Heart right ventricle (tissue), 16 donors: ENCODE measurements at regions of chr1 and their contacts with region 1.

Region 1: GRCh38 chr1:226679853-226680516 is 59.1 kb downstream of the ITPKB start:
- DNase-seq: peak; percentile 89 to 91
- ATAC-seq: peak; percentile 84 to 90 (median 88)
- H3K4me3 ChIP-seq: peak overlapping the region in 9 of 10 donors; percentile 0 to 52 (median 48)
- H3K27ac ChIP-seq: peak overlapping the region; percentile 42 to 93 (median 90)
- H3K4me1 ChIP-seq: peaks cover 0 to 100% (median 78%) of the 10 kb centered on the region in 9 donors
- H3K27me3 ChIP-seq: no peaks in the 10 kb centered on the region
- CTCF ChIP-seq: peak in 1 of 9 donors; percentile 7

Region 2: DNA sequence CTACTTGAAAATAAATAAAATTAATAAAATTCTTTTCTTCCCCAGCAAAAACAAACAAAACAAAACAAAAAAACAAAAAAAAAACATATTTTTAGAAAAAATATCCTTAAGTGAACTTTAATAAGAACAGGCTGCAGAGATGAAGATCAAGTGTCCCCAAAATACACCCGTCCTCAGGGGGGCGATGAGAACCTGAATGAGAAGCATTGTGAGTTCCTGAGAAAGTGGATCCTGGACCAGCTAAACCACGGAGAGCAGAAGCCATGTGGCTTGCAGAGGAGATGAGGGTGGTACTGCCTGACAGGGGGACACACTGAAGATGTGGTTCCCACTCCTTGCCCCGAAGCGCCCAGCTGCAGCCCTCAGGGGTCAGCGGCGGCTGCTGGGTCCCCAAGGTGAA is 30.2 kb before region 1 on chr1:
- intact Hi-C with region 1: loop called in 1 of 10 experiments (anchors 5 kb)
- DNase-seq: no peak
- ATAC-seq: peak in 5 of 8 donors; percentile 13 to 39 (median 25)
- H3K4me3 ChIP-seq: peak overlapping the region in 1 of 10 donors; percentile 5
- H3K27ac ChIP-seq: peak overlapping the region in 6 of 10 donors; percentile 7 to 70 (median 50)
- H3K4me1 ChIP-seq: peaks cover 12 to 47% (median 31%) of the 10 kb centered on the region in 9 donors
- H3K27me3 ChIP-seq: no peaks in the 10 kb centered on the region
- CTCF ChIP-seq: peak in 6 of 9 donors; percentile 11 to 49 (median 38)

Region 3: GRCh38 chr1:226662642-226663326 is 17.2 kb before region 1 on chr1:
- intact Hi-C with region 1: loop called in 1 of 10 experiments (anchors 1 kb)
- DNase-seq: peak; percentile 54 to 79
- ATAC-seq: peak; percentile 47 to 70 (median 61)
- H3K4me3 ChIP-seq: peak overlapping the region in 4 of 10 donors; percentile 10 to 14 (median 11)
- H3K27ac ChIP-seq: peak overlapping the region in 7 of 10 donors; percentile 7 to 92 (median 86)
- H3K4me1 ChIP-seq: peaks cover 0 to 100% (median 30%) of the 10 kb centered on the region in 9 donors
- H3K27me3 ChIP-seq: no peaks in the 10 kb centered on the region
- CTCF ChIP-seq: no peak

Region 4: GRCh38 chr1:227016990-227017389 is 337.0 kb after region 1 on chr1:
- intact Hi-C with region 1: no loop called
- DNase-seq: no peak
- ATAC-seq: no peak
- H3K4me3 ChIP-seq: no peak overlapping the region
- H3K27ac ChIP-seq: no peak overlapping the region
- H3K4me1 ChIP-seq: no peaks in the 10 kb centered on the region
- H3K27me3 ChIP-seq: no peaks in the 10 kb centered on the region
- CTCF ChIP-seq: no peak